ENCODE measurements at regions of chr2 and their contacts with region 1.

Region 1: DNA sequence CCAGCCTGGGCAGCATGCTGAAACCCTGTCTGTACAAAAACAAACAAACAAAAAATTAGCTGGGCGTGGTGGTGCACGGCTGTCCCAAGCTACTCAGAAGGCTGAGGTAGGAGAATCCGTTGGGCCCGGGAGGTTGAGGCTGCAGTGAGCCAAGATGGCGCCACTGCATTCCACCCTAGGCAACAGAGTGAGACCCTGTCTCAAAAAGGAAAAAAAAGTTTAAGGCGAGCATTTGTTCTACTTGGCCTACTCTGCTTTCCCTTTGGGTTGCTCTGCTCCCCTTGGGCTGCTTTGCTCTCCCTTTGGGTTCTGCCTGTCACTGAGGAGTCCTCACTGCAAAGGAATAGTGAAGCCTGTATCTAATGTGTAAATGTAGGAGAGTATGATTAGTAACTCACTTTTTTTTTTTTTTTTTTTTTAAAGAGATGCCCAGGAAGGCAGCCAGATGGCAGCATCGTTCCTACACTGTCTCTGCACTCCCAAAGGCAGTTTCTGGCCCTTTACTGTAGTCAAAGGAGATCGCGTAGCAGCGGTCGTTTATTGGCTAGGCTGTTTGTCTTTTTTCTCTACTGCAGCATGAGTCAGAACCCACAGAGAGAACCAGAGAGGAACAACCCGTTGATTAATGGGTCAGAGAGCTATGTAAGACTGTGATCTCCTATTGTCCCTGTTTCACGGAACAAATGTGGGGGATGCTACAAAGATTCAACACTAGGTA is 118.3 kb upstream of the CWC22 start:
- DNase-seq: peak; percentile 65 to 72
- H3K4me3 ChIP-seq: no peak overlapping the region
- H3K4me3 Mint-ChIP-seq: no peak overlapping the region
- H3K27ac Mint-ChIP-seq: no peak overlapping the region
- H3K4me1 ChIP-seq: no peaks in the 10 kb centered on the region
- H3K4me1 Mint-ChIP-seq: no peaks in the 10 kb centered on the region
- H3K27me3 ChIP-seq: no peaks in the 10 kb centered on the region
- H3K27me3 Mint-ChIP-seq: peaks cover 6% of the 10 kb centered on the region
- CTCF ChIP-seq: peak; percentile 45 to 76

Region 2: GRCh38 chr2:180240774-180241173 is 115.4 kb after region 1 on chr2:
- CTCF ChIA-PET with region 1: no interaction called
- POLR2A ChIA-PET with region 1: no interaction called
- intact Hi-C with region 1: loop called (anchors 5 kb)
- DNase-seq: peak in 1 of 2 experiments; percentile 15
- H3K4me3 ChIP-seq: no peak overlapping the region
- H3K4me3 Mint-ChIP-seq: no peak overlapping the region
- H3K27ac Mint-ChIP-seq: no peak overlapping the region
- H3K4me1 ChIP-seq: no peaks in the 10 kb centered on the region
- H3K4me1 Mint-ChIP-seq: no peaks in the 10 kb centered on the region
- H3K27me3 ChIP-seq: no peaks in the 10 kb centered on the region
- H3K27me3 Mint-ChIP-seq: no peaks in the 10 kb centered on the region
- CTCF ChIP-seq: peak; percentile 33 to 36

Region 3: GRCh38 chr2:180405520-180405919 is 280.1 kb after region 1 on chr2:
- CTCF ChIA-PET with region 1: no interaction called
- POLR2A ChIA-PET with region 1: no interaction called
- intact Hi-C with region 1: no loop called
- DNase-seq: no peak
- H3K4me3 ChIP-seq: no peak overlapping the region
- H3K4me3 Mint-ChIP-seq: no peak overlapping the region
- H3K27ac Mint-ChIP-seq: no peak overlapping the region
- H3K4me1 ChIP-seq: no peaks in the 10 kb centered on the region
- H3K4me1 Mint-ChIP-seq: no peaks in the 10 kb centered on the region
- H3K27me3 ChIP-seq: no peaks in the 10 kb centered on the region
- H3K27me3 Mint-ChIP-seq: no peaks in the 10 kb centered on the region
- CTCF ChIP-seq: no peak

Region 4: DNA sequence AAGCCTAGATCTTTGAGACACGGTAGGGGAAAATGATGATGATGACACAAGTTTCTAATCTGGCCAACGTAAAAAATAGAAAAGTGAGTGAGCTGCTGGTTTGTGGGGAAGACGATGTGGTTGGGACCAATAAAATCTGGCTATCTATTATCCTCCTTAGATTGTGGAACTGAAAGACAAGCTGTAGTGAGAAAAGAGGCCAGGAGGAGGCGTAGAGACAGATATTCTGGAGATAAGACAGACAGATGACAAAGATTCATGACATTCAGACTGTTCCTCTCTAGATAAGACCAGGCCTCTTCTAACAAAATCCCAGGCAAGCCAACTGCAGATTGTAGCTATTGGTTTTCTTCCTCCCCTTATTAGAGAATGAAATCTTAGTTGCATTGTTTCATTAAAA is 478.7 kb after region 1 on chr2:
- CTCF ChIA-PET with region 1: no interaction called
- POLR2A ChIA-PET with region 1: no interaction called
- intact Hi-C with region 1: loop called (anchors 5 kb)
- DNase-seq: peak in 1 of 2 experiments; percentile 19
- H3K4me3 ChIP-seq: no peak overlapping the region
- H3K4me3 Mint-ChIP-seq: no peak overlapping the region
- H3K27ac Mint-ChIP-seq: no peak overlapping the region
- H3K4me1 ChIP-seq: no peaks in the 10 kb centered on the region
- H3K4me1 Mint-ChIP-seq: peaks cover 7% of the 10 kb centered on the region
- H3K27me3 ChIP-seq: no peaks in the 10 kb centered on the region
- H3K27me3 Mint-ChIP-seq: no peaks in the 10 kb centered on the region
- CTCF ChIP-seq: peak; percentile 41 to 49

Region 5: DNA sequence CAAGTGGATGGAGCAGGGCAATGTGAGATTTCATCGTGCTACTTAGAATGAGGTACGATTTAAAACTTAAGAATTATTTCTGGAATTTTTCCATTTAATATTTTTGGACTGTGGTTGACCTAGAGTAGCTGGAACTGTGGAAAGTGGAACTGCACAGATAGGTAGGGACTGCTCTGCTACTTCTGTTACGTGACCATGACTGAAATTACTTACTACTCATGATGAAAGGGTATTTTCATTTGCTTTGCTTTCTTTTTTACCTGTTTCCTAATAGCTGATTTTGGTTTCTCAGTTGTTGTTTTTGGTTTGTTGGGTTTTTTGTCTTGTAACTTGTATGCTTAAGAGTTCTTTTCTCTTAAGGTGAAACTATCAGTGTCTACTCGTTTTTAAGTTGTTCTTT is 866.4 kb after region 1 on chr2:
- CTCF ChIA-PET with region 1: no interaction called
- POLR2A ChIA-PET with region 1: no interaction called
- intact Hi-C with region 1: loop called (anchors 1 kb)
- DNase-seq: no peak
- H3K4me3 ChIP-seq: no peak overlapping the region
- H3K4me3 Mint-ChIP-seq: no peak overlapping the region
- H3K27ac Mint-ChIP-seq: no peak overlapping the region
- H3K4me1 ChIP-seq: no peaks in the 10 kb centered on the region
- H3K4me1 Mint-ChIP-seq: no peaks in the 10 kb centered on the region
- H3K27me3 ChIP-seq: no peaks in the 10 kb centered on the region
- H3K27me3 Mint-ChIP-seq: no peaks in the 10 kb centered on the region
- CTCF ChIP-seq: no peak

Region 6: DNA sequence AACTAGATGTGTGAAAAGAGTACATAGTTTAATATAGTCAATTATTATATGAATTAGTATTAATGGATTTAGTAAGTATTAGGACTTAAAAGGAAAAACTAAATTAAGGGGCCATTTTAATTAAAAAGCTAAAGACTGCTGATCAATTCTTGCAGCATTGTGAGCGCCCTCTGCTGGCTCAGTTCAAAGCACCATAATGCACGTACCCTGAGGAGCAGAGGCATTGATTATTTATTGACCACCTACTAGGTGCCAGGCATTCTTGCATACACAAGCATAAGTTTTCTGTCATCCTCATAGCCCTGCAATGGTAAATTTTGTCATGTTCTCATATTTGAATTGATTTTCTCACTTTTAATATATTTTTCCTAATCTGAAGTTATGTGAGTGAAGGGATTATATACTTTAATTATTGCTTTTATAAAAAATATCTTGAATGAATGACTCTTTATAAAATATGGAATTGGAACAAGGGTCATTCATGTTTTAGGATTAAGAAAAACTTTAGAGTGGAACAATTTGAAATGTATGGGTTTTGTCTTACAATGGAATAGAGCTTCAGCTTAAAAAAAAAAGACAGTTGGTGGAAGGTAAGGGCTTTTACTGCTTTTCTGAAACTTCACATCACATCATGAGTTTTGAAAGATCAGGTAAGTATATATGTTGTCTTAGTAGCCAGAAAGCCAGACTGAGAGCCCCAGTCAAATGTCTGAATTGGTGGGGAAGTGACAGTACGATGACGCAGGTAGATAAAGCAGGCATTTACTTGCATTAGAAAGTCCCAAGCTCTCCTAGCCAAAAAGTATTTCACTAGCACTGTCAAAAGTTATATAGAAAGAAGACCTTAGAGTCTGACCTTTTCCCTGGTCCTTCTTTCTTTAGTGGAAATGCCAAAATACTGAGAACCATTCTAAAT is 1341.5 kb after region 1 on chr2:
- CTCF ChIA-PET with region 1: no interaction called
- POLR2A ChIA-PET with region 1: no interaction called
- intact Hi-C with region 1: loop called (anchors 1 kb)
- DNase-seq: peak; percentile 52 to 56
- H3K4me3 ChIP-seq: no peak overlapping the region
- H3K4me3 Mint-ChIP-seq: no peak overlapping the region
- H3K27ac Mint-ChIP-seq: no peak overlapping the region
- H3K4me1 ChIP-seq: no peaks in the 10 kb centered on the region
- H3K4me1 Mint-ChIP-seq: no peaks in the 10 kb centered on the region
- H3K27me3 ChIP-seq: no peaks in the 10 kb centered on the region
- H3K27me3 Mint-ChIP-seq: peaks cover 16% of the 10 kb centered on the region
- CTCF ChIP-seq: peak; percentile 77 to 82